ENCODE measurements at regions of chr1 and their contacts with region 1.

Region 1: GRCh38 chr1:248618878-248619277 is 16.0 kb downstream of the OR2T11 start:
- DNase-seq: no peak
- H3K4me3 ChIP-seq: no peak overlapping the region
- H3K27ac ChIP-seq: no peak overlapping the region
- H3K4me1 ChIP-seq: no peaks in the 10 kb centered on the region
- H3K27me3 ChIP-seq: no peaks in the 10 kb centered on the region
- CTCF ChIP-seq: peak; percentile 44 to 67 (median 45)
- EP300 ChIP-seq: no peak
- POLR2A ChIP-seq: no peak

Region 2: GRCh38 chr1:248521859-248522258 is 97.0 kb before region 1 on chr1:
- intact Hi-C with region 1: no loop called
- DNase-seq: no peak
- H3K4me3 ChIP-seq: no peak overlapping the region
- H3K27ac ChIP-seq: no peak overlapping the region
- H3K4me1 ChIP-seq: no peaks in the 10 kb centered on the region
- H3K27me3 ChIP-seq: no peaks in the 10 kb centered on the region
- CTCF ChIP-seq: no peak
- EP300 ChIP-seq: no peak
- POLR2A ChIP-seq: no peak

Region 3: DNA sequence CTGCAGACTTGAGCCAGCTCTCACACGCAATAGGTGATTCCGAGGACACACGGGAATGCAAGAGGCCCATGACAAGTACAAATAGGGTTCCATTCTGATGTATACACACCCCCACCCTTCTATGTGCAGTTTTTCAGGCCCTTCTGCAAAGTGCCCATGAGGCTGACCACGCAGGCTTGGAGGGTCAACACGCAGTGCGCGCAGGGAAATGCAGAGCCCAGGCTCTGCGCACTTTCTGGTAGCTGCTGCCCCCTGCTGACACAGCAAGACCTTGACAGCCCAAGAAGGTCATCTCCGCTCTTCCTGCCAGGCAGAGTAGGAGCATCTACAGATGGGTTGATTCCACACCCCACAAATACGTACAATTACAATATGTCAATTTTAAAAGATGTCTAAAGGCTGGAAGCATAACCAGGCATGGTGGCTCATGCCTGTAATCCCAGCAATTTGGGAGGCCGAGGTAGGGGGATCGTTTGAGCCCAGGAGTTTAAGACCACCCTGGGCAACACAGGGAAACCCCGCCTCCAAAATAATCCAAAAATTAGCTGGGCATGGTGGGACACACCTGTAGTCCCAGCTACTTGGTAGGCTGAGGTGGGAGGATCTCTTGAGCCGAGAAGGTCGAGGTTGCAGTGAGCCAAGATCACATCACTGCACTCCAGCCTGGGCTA is 188.3 kb after region 1 on chr1:
- intact Hi-C with region 1: loop called (anchors 2 kb)
- DNase-seq: no peak
- H3K4me3 ChIP-seq: no peak overlapping the region
- H3K27ac ChIP-seq: no peak overlapping the region
- H3K4me1 ChIP-seq: peaks cover 11 to 35% (median 26%) of the 10 kb centered on the region in 4 donors
- H3K27me3 ChIP-seq: peaks cover 0 to 5% (median 0%) of the 10 kb centered on the region in 4 donors
- CTCF ChIP-seq: peak; percentile 58 to 82 (median 64)
- EP300 ChIP-seq: no peak
- POLR2A ChIP-seq: no peak